Breast epithelium (tissue), 4 donors: ENCODE measurements at regions of chr6 and their contacts with region 1.

Region 1: GRCh38 chr6:68158256-68158655 is 476.8 kb upstream of the ADGRB3 start:
- DNase-seq: no peak
- H3K4me3 ChIP-seq: no peak overlapping the region
- H3K27ac ChIP-seq: no peak overlapping the region
- H3K4me1 ChIP-seq: no peaks in the 10 kb centered on the region
- H3K27me3 ChIP-seq: no peaks in the 10 kb centered on the region
- CTCF ChIP-seq: no peak
- POLR2A ChIP-seq: no peak

Region 2: GRCh38 chr6:67000121-67000520 is 1158.1 kb before region 1 on chr6:
- intact Hi-C with region 1: loop called (anchors 5 kb)
- DNase-seq: no peak
- H3K4me3 ChIP-seq: no peak overlapping the region
- H3K27ac ChIP-seq: no peak overlapping the region
- H3K4me1 ChIP-seq: no peaks in the 10 kb centered on the region
- H3K27me3 ChIP-seq: no peaks in the 10 kb centered on the region
- CTCF ChIP-seq: no peak
- POLR2A ChIP-seq: no peak